MCF 10A (cell line): ENCODE measurements at regions of chr7 and their contacts with region 1.

Region 1: GRCh38 chr7:95527033-95527775 is 41.5 kb downstream of the ASB4 start:
- DNase-seq: peak; percentile 83
- H3K4me3 Mint-ChIP-seq: no peak overlapping the region
- H3K27ac Mint-ChIP-seq: no peak overlapping the region
- H3K4me1 Mint-ChIP-seq: peaks cover 6% of the 10 kb centered on the region
- H3K27me3 Mint-ChIP-seq: peaks cover 38% of the 10 kb centered on the region
- CTCF ChIP-seq: peak; percentile 80

Region 2: DNA sequence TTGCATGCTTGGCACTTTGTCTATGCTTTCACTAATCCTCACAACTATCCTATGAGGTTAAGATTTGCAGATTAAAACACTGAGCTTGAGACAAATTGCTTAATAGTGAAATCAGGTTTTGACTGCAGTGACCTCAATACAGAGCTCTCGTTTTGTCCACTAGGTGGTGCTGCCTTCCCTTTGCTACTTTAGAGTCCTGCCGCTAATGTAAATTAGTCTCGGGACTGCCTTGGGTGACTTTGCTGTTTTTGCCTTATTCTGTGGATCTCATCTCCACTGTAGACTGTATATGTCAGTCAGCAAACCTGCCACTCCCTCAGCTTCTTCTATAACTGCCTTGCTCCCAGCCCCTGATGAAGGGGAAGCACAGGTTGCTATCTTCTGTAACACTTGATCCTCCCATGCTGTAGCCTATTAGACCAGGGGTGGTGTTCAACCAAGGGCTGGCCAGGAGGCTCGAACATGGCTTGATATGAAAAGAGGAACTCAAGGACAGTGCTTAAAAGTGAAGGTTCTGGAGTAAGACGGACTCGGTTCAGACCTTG is 15.4 kb before region 1 on chr7:
- CTCF ChIA-PET with region 1: interaction called, 267 read pairs
- POLR2A ChIA-PET with region 1: no interaction called
- intact Hi-C with region 1: no loop called
- DNase-seq: peak; percentile 78
- H3K4me3 Mint-ChIP-seq: no peak overlapping the region
- H3K27ac Mint-ChIP-seq: no peak overlapping the region
- H3K4me1 Mint-ChIP-seq: no peaks in the 10 kb centered on the region
- H3K27me3 Mint-ChIP-seq: peaks cover 29% of the 10 kb centered on the region
- CTCF ChIP-seq: peak; percentile 59

Region 3: GRCh38 chr7:95558864-95559263 is 31.7 kb after region 1 on chr7:
- CTCF ChIA-PET with region 1: interaction called, 12 read pairs
- POLR2A ChIA-PET with region 1: no interaction called
- intact Hi-C with region 1: no loop called
- DNase-seq: no peak
- H3K4me3 Mint-ChIP-seq: no peak overlapping the region
- H3K27ac Mint-ChIP-seq: no peak overlapping the region
- H3K4me1 Mint-ChIP-seq: peaks cover 3% of the 10 kb centered on the region
- H3K27me3 Mint-ChIP-seq: no peaks in the 10 kb centered on the region
- CTCF ChIP-seq: no peak

Region 4: DNA sequence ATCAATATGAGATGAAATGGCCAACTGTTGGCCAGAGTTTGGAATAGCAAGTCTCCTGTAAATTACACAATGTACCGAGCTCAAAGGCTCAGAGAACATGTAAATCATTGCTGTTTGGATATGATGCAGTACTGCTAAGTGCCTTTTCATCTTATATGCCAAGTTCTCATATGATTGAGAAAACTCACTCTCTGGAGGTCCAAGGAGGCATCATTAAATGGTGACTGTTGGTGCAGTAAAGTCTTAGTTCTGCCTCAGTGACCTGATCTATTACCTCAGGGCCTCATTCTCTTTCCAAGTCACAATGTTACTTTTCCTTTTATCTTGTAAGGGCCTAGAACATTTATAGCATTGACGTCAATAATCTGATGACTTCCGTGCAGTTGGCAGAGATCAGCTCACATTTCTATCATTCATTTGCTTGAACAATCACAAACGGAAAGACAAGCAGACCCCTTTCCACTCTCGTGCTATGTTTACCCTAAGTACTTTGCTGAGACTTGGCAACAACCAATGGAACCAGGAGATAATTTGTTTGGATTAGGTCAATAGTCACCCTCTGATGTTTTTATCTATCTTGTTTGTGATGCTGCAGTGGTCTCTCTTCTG is 101.7 kb after region 1 on chr7:
- CTCF ChIA-PET with region 1: interaction called, 10 read pairs
- POLR2A ChIA-PET with region 1: no interaction called
- intact Hi-C with region 1: no loop called
- DNase-seq: peak; percentile 46
- H3K4me3 Mint-ChIP-seq: no peak overlapping the region
- H3K27ac Mint-ChIP-seq: no peak overlapping the region
- H3K4me1 Mint-ChIP-seq: peaks cover 8% of the 10 kb centered on the region
- H3K27me3 Mint-ChIP-seq: no peaks in the 10 kb centered on the region
- CTCF ChIP-seq: no peak

Region 5: DNA sequence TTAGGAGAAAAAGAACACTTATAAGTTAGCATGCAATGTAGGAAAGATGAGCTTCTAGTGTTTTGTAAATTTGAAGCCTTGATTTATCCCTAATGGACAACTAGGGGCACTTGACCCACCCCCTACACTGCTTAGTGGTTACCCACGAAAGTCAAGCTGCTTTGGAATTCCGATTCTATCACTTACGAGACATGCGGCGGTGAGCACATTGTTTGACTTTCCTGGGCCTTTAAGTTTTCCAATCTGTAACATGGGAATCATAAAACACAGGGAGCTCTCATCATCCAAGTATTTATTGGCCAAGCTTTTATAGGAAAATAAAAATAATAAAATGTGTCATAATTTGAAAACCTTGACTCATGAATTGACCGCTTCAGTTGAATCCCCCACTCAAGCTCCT is 147.8 kb after region 1 on chr7:
- CTCF ChIA-PET with region 1: interaction called, 131 read pairs
- POLR2A ChIA-PET with region 1: no interaction called
- intact Hi-C with region 1: no loop called
- DNase-seq: no peak
- H3K4me3 Mint-ChIP-seq: no peak overlapping the region
- H3K27ac Mint-ChIP-seq: no peak overlapping the region
- H3K4me1 Mint-ChIP-seq: no peaks in the 10 kb centered on the region
- H3K27me3 Mint-ChIP-seq: no peaks in the 10 kb centered on the region
- CTCF ChIP-seq: no peak

Region 6: DNA sequence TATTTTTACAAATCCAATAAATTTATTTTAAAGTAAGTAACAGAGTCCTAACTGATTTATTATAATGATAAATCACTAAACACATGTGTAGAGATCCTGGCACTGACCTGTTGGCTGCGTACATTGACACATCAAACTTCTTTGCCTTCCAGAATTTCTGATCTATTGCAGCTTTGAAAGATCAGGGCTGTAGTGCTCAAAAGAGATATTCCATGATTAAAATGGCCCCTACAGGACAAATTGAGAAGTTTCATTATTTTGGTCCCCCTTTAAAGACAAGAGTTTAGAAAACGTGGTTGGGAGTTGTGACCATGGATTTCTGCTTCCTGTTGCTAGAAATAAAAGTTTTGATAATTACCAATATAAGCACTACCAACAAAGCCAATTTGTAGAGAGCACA is 156.8 kb after region 1 on chr7:
- CTCF ChIA-PET with region 1: interaction called, 1,114 read pairs
- POLR2A ChIA-PET with region 1: interaction called, 54 read pairs
- intact Hi-C with region 1: loop called (anchors 1 kb)
- DNase-seq: peak; percentile 60
- H3K4me3 Mint-ChIP-seq: no peak overlapping the region
- H3K27ac Mint-ChIP-seq: no peak overlapping the region
- H3K4me1 Mint-ChIP-seq: peaks cover 4% of the 10 kb centered on the region
- H3K27me3 Mint-ChIP-seq: no peaks in the 10 kb centered on the region
- CTCF ChIP-seq: peak; percentile 19